MCF 10A (cell line): ENCODE measurements at regions of chr12 and their contacts with region 1.

Region 1: GRCh38 chr12:131673888-131674257 is 37.0 kb upstream of the SFSWAP start:
- DNase-seq: peak; percentile 42
- H3K4me3 Mint-ChIP-seq: no peak overlapping the region
- H3K27ac Mint-ChIP-seq: no peak overlapping the region
- H3K4me1 Mint-ChIP-seq: no peaks in the 10 kb centered on the region
- H3K27me3 Mint-ChIP-seq: peaks cover 31% of the 10 kb centered on the region
- CTCF ChIP-seq: no peak

Region 2: DNA sequence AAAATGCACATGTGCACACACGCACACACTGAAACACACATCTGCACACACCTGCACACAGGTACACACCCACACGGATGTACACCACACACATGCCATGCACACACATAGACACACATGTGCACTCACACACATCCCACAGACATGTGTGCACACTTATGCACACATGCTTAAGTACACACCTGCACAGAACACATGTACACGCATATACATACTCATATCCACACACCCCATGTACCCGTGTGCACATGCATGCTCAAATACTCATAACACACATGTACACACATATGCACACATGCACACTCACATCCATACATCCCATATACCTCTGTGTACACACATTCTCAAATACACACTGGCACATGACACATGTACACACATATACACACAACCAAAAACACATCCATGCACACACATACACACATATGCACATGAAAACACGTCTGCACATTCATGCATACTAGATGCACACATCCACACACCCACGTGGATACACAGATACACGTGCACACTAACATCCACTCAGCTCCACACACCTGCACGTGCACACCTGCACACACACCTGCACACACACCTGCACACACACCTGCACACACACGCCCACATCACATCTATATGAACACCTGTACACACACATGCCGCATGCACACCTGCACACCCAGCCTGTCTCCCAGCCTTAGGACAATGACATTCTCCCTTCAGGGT is 383.5 kb before region 1 on chr12:
- CTCF ChIA-PET with region 1: no interaction called
- POLR2A ChIA-PET with region 1: no interaction called
- intact Hi-C with region 1: loop called (anchors 10 kb)
- DNase-seq: no peak
- H3K4me3 Mint-ChIP-seq: no peak overlapping the region
- H3K27ac Mint-ChIP-seq: no peak overlapping the region
- H3K4me1 Mint-ChIP-seq: peaks cover 1% of the 10 kb centered on the region
- H3K27me3 Mint-ChIP-seq: peaks cover 12% of the 10 kb centered on the region
- CTCF ChIP-seq: no peak

Region 3: DNA sequence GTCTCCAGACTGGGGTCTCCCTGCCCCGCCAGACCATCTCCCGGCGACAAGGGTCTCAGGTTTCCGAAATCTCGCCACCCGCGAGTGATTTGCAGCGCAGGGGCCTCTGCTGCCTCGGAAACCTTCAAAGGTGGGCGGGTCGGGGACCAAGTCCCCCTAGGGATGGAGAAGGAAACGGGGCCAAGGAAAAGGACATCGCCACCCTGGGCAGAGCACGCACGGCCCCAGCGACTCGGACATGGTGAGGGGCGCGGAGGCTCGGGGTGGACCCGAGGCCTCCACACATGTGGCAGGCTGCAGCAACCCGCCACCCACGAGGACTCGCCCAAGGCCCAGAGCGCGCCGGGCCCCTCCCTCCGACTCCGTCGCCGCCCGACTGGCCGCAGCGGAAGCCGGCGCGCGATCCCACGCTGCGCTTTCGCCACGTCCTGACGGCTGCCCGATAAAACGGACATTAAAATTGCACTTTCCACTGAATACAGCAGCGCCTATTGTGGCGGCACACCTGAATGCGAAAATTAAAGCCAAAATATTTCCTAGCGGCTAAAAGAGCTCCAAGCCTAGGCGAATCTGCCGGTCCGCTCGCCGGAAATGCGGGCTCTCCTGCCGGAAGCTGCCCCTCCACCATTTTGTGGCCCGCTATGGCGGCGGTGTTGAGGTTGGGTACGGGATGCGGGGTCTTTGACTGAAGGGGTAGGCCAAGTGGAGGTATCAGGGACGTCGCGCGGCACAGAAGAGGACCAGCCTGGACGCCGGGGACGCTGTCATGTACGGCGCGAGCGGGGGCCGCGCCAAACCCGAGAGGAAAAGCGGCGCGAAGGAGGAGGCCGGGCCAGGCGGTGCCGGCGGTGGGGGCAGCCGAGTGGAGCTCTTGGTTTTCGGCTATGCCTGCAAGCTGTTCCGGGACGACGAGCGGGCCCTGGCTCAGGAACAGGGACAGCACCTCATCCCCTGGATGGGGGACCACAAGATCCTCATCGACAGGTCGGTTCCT is 36.9 kb after region 1 on chr12 and contains the start of gene SFSWAP:
- CTCF ChIA-PET with region 1: no interaction called
- POLR2A ChIA-PET with region 1: no interaction called
- intact Hi-C with region 1: no loop called
- DNase-seq: peak; percentile 67
- H3K4me3 Mint-ChIP-seq: peak within 1 kb of the TSS; percentile 90
- H3K27ac Mint-ChIP-seq: peak within 1 kb of the TSS; percentile 100
- H3K4me1 Mint-ChIP-seq: peaks cover 5% of the 10 kb centered on the region
- H3K27me3 Mint-ChIP-seq: no peaks in the 10 kb centered on the region
- CTCF ChIP-seq: no peak
- total RNA-seq, gene SFSWAP: 68.2 and 68.8 TPM in 2 replicates